ENCODE measurements at regions of chr15 and their contacts with region 1.

Region 1: GRCh38 chr15:74044267-74045110 is 37.9 kb downstream of the GOLGA6A start:
- DNase-seq: peak; percentile 58 to 64
- ATAC-seq: peak; percentile 33 to 70 (median 55)
- H3K4me3 ChIP-seq: no peak overlapping the region
- H3K27ac ChIP-seq: peak overlapping the region; percentile 43 to 86 (median 74)
- H3K4me1 ChIP-seq: peaks cover 17 to 80% (median 61%) of the 10 kb centered on the region in 9 donors
- H3K27me3 ChIP-seq: no peaks in the 10 kb centered on the region
- CTCF ChIP-seq: no peak

Region 2: GRCh38 chr15:73897441-73898261 is 146.8 kb before region 1 on chr15:
- intact Hi-C with region 1: no loop called
- DNase-seq: peak; percentile 44 to 66
- ATAC-seq: peak; percentile 74 to 95 (median 88)
- H3K4me3 ChIP-seq: no peak overlapping the region
- H3K27ac ChIP-seq: no peak overlapping the region
- H3K4me1 ChIP-seq: peaks cover 0 to 4% (median 0%) of the 10 kb centered on the region in 9 donors
- H3K27me3 ChIP-seq: peaks cover 0 to 4% (median 0%) of the 10 kb centered on the region in 7 donors
- CTCF ChIP-seq: peak; percentile 72 to 92 (median 83)

Region 3: GRCh38 chr15:73982222-73982962 is 62.1 kb before region 1 on chr15:
- intact Hi-C with region 1: loop called in 2 of 10 experiments (anchors 5 kb)
- DNase-seq: peak; percentile 87 to 89
- ATAC-seq: peak; percentile 85 to 95 (median 92)
- H3K4me3 ChIP-seq: peak overlapping the region in 4 of 10 donors; percentile 12 to 32 (median 26)
- H3K27ac ChIP-seq: peak overlapping the region; percentile 88 to 100 (median 98)
- H3K4me1 ChIP-seq: peaks cover 52 to 78% (median 66%) of the 10 kb centered on the region in 9 donors
- H3K27me3 ChIP-seq: no peaks in the 10 kb centered on the region
- CTCF ChIP-seq: peak in 1 of 9 donors; percentile 21

Measured in heart right ventricle (tissue), 16 donors.